OCI-LY7 (cell line): ENCODE measurements at regions of chr3 and their contacts with region 1.

Region 1: GRCh38 chr3:159260049-159260662 is 458.3 kb downstream of the MFSD1 start:
- DNase-seq: peak; percentile 63
- H3K4me3 ChIP-seq: no peak overlapping the region
- H3K27ac ChIP-seq: no peak overlapping the region
- H3K4me1 ChIP-seq: no peaks in the 10 kb centered on the region
- CTCF ChIP-seq: peak; percentile 90

Region 2: DNA sequence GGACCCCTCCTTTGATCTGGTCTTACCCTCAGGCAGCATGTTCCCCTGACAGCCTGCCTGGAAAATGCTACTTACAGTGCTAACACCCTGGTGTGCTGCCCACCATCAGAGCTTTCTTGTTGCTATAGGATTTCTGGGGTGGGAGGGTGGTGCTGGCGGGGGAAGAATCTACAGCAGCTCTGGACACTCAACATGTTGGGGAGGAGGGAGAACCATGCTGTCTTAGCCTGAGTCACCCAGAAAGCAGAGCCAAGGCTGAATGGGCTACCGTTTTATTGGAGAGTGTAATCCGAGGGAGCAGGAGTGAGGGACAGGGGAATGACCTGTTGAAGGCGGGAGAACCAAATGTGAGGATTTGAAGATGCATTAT is 412.7 kb before region 1 on chr3:
- CTCF ChIA-PET with region 1: no interaction called
- POLR2A ChIA-PET with region 1: interaction called, 3 read pairs
- intact Hi-C with region 1: loop called (anchors 1 kb)
- DNase-seq: no peak
- H3K4me3 ChIP-seq: no peak overlapping the region
- H3K27ac ChIP-seq: no peak overlapping the region
- H3K4me1 ChIP-seq: no peaks in the 10 kb centered on the region
- CTCF ChIP-seq: no peak

Region 3: DNA sequence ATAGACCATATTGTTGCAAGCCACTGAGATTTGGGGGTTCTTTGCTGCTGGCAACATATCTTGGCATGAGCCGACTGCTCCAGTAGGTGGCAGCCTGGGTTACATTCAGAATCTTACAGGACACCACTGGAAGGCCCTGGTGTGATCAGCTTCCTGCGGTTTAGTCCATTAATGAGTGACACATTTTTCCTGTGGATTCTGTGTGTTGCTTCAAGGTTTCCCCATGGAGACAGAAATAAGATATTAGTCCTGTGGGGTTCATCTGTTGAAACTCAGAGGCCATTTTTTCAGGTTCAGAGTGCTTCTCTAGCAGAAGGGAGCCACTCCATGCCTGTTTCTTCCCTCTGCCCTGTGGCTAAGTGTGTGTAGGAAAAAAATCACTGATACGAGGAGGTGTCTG is 342.1 kb before region 1 on chr3:
- CTCF ChIA-PET with region 1: no interaction called
- POLR2A ChIA-PET with region 1: interaction called, 3 read pairs
- intact Hi-C with region 1: loop called (anchors 5 kb)
- DNase-seq: peak; percentile 38
- H3K4me3 ChIP-seq: no peak overlapping the region
- H3K27ac ChIP-seq: no peak overlapping the region
- H3K4me1 ChIP-seq: no peaks in the 10 kb centered on the region
- CTCF ChIP-seq: peak; percentile 79

Region 4: GRCh38 chr3:159301961-159302360 is 41.8 kb after region 1 on chr3:
- CTCF ChIA-PET with region 1: no interaction called
- POLR2A ChIA-PET with region 1: no interaction called
- intact Hi-C with region 1: no loop called
- DNase-seq: no peak
- H3K4me3 ChIP-seq: no peak overlapping the region
- H3K27ac ChIP-seq: no peak overlapping the region
- H3K4me1 ChIP-seq: no peaks in the 10 kb centered on the region
- CTCF ChIP-seq: no peak

Region 5: GRCh38 chr3:159586571-159587202 is 326.5 kb after region 1 on chr3:
- CTCF ChIA-PET with region 1: no interaction called
- POLR2A ChIA-PET with region 1: no interaction called
- intact Hi-C with region 1: loop called (anchors 5 kb)
- DNase-seq: no peak
- H3K4me3 ChIP-seq: no peak overlapping the region
- H3K27ac ChIP-seq: no peak overlapping the region
- H3K4me1 ChIP-seq: no peaks in the 10 kb centered on the region
- CTCF ChIP-seq: peak; percentile 63

Region 6: DNA sequence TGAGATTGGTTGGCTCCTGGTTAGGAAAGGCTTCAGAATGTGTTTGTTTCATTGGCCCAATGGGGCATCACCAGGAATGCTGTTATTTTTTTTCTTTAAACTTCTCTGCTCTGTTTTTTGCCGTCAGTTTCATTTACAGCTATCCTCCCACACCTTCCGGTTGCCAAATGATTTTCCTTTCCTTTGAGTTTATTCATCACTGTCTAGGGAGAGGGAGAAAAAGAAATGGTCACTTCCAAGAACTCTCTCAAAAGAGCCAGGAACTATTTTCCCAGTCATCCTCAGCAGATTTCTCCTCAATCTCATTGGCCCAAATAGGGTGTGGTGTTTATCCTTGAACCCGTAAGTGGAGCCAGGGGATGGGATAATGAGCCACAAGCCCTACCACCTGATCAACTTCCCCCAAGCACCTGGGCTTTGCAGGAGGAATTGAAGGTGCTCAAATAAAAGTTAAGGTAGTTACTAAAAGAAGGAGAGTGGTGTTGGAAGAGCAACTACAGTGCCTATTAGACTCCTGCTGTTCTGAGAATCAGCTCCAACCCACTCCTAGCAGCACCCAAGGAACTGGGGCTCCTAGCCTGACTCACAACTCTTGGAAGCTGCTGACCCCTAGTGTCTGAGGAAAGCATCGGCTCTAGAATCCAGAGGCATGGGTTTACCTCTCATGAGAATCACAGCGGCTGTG is 544.7 kb after region 1 on chr3:
- CTCF ChIA-PET with region 1: no interaction called
- POLR2A ChIA-PET with region 1: no interaction called
- intact Hi-C with region 1: loop called (anchors 2 kb)
- DNase-seq: peak; percentile 58
- H3K4me3 ChIP-seq: no peak overlapping the region
- H3K27ac ChIP-seq: no peak overlapping the region
- H3K4me1 ChIP-seq: no peaks in the 10 kb centered on the region
- CTCF ChIP-seq: peak; percentile 83